Heart right ventricle (tissue), 16 donors: ENCODE measurements at regions of chr2 and their contacts with region 1.

Region 1: DNA sequence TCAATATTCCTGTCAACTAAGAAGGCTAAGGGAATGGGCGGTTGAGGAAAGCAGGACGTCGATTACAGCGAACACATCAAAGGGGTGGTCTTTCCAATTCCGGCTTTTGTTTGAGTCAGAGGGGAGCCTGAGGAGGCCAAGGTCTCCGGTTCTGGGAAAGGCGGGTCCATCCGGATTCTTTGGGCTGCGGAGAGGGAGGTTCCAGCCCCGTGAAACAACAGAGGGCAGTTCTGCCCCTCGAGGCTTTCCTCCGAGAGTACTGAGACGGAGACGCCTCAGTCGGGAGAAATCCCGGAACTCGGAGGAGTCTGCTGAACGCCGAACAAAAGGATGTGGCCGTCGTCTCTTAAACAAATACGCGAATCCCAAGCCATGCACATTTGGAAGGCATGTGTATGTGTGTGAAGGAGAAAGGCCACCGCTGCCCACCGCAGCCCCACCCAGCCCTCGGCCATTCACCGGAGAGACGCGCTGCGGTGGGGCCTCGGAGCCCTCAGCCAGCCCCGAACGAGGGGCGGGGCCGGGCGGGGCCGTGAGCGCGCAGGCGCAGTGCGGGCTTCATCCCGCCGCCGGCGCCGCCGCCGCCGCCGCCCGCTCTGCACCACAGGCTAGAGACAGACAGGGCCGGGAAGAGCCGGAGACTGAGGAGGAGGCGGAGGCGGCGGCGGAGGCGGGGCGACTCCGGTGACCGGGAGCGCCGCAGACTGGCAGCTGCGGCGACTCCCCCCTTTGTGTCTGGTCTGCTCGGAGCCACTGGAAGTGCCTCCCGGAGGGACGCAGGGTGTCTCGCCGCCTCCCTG is at the start of gene BMPR2:
- DNase-seq: peak; percentile 90 to 91
- ATAC-seq: peak; percentile 85 to 94 (median 90)
- H3K4me3 ChIP-seq: peak within 1 kb of the TSS; percentile 74 to 98 (median 93)
- H3K27ac ChIP-seq: peak within 1 kb of the TSS; percentile 92 to 100 (median 98)
- H3K4me1 ChIP-seq: peaks cover 2 to 39% (median 23%) of the 10 kb centered on the region in 9 donors
- H3K27me3 ChIP-seq: peaks cover 0 to 5% (median 0%) of the 10 kb centered on the region in 7 donors
- CTCF ChIP-seq: no peak
- total RNA-seq, gene BMPR2: 48.5 to 89.4 (median 75.3) TPM

Region 2: GRCh38 chr2:202289394-202290204 is 86.2 kb before region 1 on chr2:
- intact Hi-C with region 1: loop called in 1 of 10 experiments (anchors 10 kb)
- DNase-seq: no peak
- ATAC-seq: no peak
- H3K4me3 ChIP-seq: no peak overlapping the region
- H3K27ac ChIP-seq: no peak overlapping the region
- H3K4me1 ChIP-seq: peaks cover 0 to 3% (median 0%) of the 10 kb centered on the region in 9 donors
- H3K27me3 ChIP-seq: no peaks in the 10 kb centered on the region
- CTCF ChIP-seq: no peak

Region 3: DNA sequence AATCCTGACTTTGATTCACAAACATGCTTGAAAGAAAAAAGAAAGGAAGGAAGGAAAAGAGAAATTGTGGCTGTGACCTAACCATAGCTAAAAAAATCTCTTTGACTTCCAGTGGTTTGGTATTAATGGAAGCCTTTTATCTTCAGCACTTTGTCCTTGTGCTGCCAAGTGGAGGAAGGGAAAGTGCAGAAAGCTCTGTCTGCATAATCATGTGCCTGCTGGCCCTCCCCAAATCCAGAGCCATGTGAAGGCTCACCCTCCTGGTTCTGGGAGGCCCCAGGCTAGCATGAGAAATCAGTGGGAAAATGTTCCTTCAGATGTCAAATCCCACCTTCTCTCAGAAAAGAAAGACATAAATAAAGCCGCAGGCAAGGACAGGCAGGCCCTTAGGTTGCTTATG is 48.0 kb before region 1 on chr2:
- intact Hi-C with region 1: loop called in 1 of 10 experiments (anchors 10 kb)
- DNase-seq: peak in 1 of 2 donors; percentile 16
- ATAC-seq: peak in 7 of 8 donors; percentile 63 to 94 (median 79)
- H3K4me3 ChIP-seq: no peak overlapping the region
- H3K27ac ChIP-seq: peak overlapping the region in 7 of 10 donors; percentile 33 to 81 (median 49)
- H3K4me1 ChIP-seq: peaks cover 0 to 16% (median 5%) of the 10 kb centered on the region in 9 donors
- H3K27me3 ChIP-seq: no peaks in the 10 kb centered on the region
- CTCF ChIP-seq: no peak

Region 4: DNA sequence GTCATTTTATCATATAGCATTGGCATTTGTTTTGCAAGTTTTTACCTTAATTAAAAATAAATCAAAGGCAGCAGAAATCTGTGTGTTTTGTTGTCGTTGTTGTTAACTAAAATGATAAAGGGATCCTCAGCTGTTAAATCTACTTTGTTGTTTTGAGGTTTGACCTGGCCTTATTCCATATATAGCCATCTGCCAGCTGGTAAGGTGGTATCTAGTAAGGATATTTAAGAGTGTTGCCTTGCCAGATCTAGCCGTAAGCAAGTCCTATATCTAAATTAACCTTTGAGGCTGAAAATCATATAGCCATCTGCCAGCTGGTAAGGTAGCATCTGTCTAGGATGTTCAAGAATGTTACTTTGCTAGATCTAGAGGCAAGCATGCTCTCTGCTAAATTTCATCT is 57.0 kb after region 1 on chr2:
- intact Hi-C with region 1: loop called in 1 of 10 experiments (anchors 5 kb)
- DNase-seq: no peak
- ATAC-seq: no peak
- H3K4me3 ChIP-seq: no peak overlapping the region
- H3K27ac ChIP-seq: no peak overlapping the region
- H3K4me1 ChIP-seq: peaks cover 3 to 78% (median 50%) of the 10 kb centered on the region in 9 donors
- H3K27me3 ChIP-seq: no peaks in the 10 kb centered on the region
- CTCF ChIP-seq: no peak

Region 5: GRCh38 chr2:202541137-202541536 is 165.3 kb after region 1 on chr2:
- intact Hi-C with region 1: loop called in 2 of 10 experiments (anchors 5 to 10 kb)
- DNase-seq: peak in 1 of 2 donors; percentile 27
- ATAC-seq: peak in 7 of 8 donors; percentile 58 to 93 (median 89)
- H3K4me3 ChIP-seq: no peak overlapping the region
- H3K27ac ChIP-seq: peak overlapping the region in 2 of 10 donors; percentile 9 to 25
- H3K4me1 ChIP-seq: peaks cover 0 to 47% (median 18%) of the 10 kb centered on the region in 9 donors
- H3K27me3 ChIP-seq: no peaks in the 10 kb centered on the region
- CTCF ChIP-seq: no peak